ENCODE measurements at regions of chr22 and their contacts with region 1.

Region 1: GRCh38 chr22:41910050-41911000 is 4.5 kb downstream of the SHISA8 start:
- DNase-seq: peak in 6 of 10 donors; percentile 14 to 44 (median 34)
- ATAC-seq: peak; percentile 50 to 56
- H3K4me3 Mint-ChIP-seq: peak overlapping the region in 9 of 10 donors; percentile 50 to 81 (median 70)
- H3K27ac Mint-ChIP-seq: no peak overlapping the region
- H3K4me1 Mint-ChIP-seq: peaks cover 12 to 34% (median 34%) of the 10 kb centered on the region in 4 donors
- H3K27me3 Mint-ChIP-seq: peaks cover 16 to 32% (median 23%) of the 10 kb centered on the region in 5 donors

Region 2: GRCh38 chr22:41899992-41900651 is 10.2 kb before region 1 on chr22:
- POLR2A ChIA-PET with region 1: no interaction called
- DNase-seq: no peak
- ATAC-seq: no peak
- H3K4me3 Mint-ChIP-seq: no peak overlapping the region
- H3K27ac Mint-ChIP-seq: no peak overlapping the region
- H3K4me1 Mint-ChIP-seq: no peaks in the 10 kb centered on the region
- H3K27me3 Mint-ChIP-seq: no peaks in the 10 kb centered on the region

Region 3: GRCh38 chr22:41925655-41926460 is 15.5 kb after region 1 on chr22:
- POLR2A ChIA-PET with region 1: interaction called, 11 read pairs
- DNase-seq: peak; percentile 63 to 88 (median 74)
- ATAC-seq: peak; percentile 83
- H3K4me3 Mint-ChIP-seq: peak overlapping the region; percentile 69 to 89 (median 81)
- H3K27ac Mint-ChIP-seq: peak overlapping the region in 8 of 10 donors; percentile 44 to 88 (median 67)
- H3K4me1 Mint-ChIP-seq: peaks cover 14 to 43% (median 29%) of the 10 kb centered on the region in 4 donors
- H3K27me3 Mint-ChIP-seq: peaks cover 0 to 3% (median 2%) of the 10 kb centered on the region in 5 donors

Measured in naive thymus-derived CD8-positive, alpha-beta T cell (primary cell).